Calu3 (cell line): ENCODE measurements at regions of chr3 and their contacts with region 1.

Region 1: DNA sequence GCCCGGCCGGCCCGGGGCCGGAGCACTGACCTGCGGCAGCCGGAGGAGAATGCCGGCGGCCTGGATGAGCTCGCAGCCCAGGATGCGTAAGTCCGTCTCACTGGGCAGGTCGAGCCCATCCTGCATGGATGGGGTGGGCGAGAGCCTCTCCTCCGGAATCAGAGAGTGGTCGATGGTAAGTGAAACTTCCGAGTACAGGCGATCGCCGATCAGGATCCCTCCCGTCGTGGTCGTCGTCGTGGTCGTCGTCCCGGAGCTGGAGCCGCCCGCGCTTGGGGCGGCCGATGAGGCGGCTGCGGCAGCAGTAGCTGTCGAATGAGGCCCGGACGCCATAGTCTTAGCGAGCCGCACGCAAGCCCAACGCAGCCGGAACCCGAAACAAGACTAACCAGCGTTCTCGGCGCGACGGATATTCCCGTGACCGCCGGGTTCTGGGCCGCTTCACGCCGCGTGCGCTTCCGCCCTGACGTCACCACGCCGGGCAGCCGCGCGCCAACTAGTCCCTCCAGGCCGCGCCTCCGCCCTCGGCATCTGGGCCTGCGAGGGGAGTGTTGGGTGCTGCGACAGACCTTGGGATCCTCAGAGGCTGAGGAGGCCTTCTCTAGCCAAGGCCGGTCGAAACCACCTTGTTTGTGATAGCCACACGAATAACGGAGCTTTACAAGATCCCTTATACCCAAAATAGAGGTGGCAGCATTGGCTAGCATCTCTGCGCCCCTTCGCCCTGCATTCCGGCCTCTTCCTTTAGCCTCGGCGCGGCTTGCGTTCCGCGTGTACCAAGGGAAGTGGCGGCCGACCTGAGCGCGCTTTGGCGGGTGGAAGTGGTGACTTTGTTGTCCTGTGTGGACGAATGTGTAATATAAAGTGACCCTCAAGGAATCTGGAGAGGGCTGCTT is at the start of gene CCNL1:
- DNase-seq: peak; percentile 99
- H3K4me3 Mint-ChIP-seq: peak within 1 kb of the TSS; percentile 89
- H3K27ac Mint-ChIP-seq: peak within 1 kb of the TSS; percentile 99
- H3K4me1 Mint-ChIP-seq: peaks cover 58% of the 10 kb centered on the region
- H3K27me3 Mint-ChIP-seq: no peaks in the 10 kb centered on the region
- CTCF ChIP-seq: no peak
- total RNA-seq, gene CCNL1: 291 and 303 TPM in 2 replicates

Region 2: DNA sequence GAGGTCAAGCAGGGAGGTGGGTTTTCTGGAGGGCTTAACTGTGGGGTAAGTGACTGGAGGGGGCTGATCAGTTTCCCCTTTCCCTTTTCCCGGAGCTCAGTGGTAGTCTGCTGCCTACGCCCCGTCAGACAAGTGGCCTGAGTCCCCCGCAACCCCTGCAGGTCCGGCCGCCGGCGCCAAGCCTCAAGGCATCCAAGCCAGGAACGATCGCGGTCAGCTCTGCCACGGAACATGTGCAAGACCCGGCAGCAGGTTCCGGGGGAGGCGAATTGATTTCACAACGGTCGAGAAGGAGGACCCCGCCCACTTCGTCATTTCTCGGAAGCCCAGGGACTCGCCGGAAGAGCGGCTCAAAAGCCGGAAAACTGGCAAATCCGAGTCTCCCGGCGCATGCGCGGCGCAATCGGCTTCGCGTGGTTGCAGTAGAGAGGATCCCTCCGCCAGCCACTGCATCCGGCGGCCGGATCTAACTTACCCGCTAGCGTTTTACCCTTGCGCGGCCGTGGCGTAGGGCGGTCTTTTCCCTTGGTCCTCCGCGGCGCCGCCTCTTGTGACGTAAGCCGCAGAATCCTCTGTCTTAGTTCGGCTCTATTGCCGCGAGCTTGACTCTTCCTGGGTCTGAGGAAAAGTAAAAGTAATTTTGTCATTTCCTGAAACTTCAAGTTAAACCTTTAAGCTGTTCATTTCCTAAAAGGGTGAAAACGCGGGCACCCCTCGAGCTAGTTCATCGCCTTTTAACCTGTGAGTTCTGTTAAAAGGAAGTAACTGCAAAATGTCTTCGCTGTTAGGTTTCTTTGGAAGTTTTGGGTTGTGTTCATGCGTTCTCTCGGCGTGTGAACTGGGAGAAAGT is 14.9 kb after region 1 on chr3:
- CTCF ChIA-PET with region 1: interaction called, 43 read pairs
- intact Hi-C with region 1: loop called (anchors 1 kb)
- DNase-seq: peak; percentile 100
- H3K4me3 Mint-ChIP-seq: peak overlapping the region; percentile 78
- H3K27ac Mint-ChIP-seq: peak overlapping the region; percentile 92
- H3K4me1 Mint-ChIP-seq: peaks cover 31% of the 10 kb centered on the region
- H3K27me3 Mint-ChIP-seq: no peaks in the 10 kb centered on the region
- CTCF ChIP-seq: no peak

Region 3: GRCh38 chr3:157248590-157249422 is 88.8 kb after region 1 on chr3:
- CTCF ChIA-PET with region 1: no interaction called
- intact Hi-C with region 1: loop called (anchors 5 kb)
- DNase-seq: peak; percentile 67
- H3K4me3 Mint-ChIP-seq: no peak overlapping the region
- H3K27ac Mint-ChIP-seq: peak overlapping the region; percentile 21
- H3K4me1 Mint-ChIP-seq: peaks cover 19% of the 10 kb centered on the region
- H3K27me3 Mint-ChIP-seq: no peaks in the 10 kb centered on the region
- CTCF ChIP-seq: no peak

Region 4: DNA sequence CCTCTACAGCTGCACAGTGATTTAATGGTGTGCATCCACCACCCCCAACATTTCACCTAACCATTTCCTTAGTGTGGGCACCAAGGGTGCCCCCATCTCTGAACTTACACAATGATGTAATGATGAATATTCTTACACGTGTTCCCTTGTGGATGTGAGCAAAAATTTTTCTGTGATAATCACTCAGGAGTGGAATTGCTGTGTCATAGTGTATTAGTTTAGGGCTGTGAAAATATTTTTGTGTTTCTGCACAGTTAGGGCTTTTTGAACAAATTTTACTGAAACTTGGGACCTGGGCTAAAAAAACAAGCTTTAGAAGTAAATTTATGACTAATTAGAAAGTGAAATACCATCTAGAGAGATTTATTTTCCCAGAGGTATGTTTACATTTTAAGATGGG is 134.5 kb after region 1 on chr3:
- CTCF ChIA-PET with region 1: no interaction called
- intact Hi-C with region 1: no loop called
- DNase-seq: no peak
- H3K4me3 Mint-ChIP-seq: no peak overlapping the region
- H3K27ac Mint-ChIP-seq: no peak overlapping the region
- H3K4me1 Mint-ChIP-seq: no peaks in the 10 kb centered on the region
- H3K27me3 Mint-ChIP-seq: no peaks in the 10 kb centered on the region
- CTCF ChIP-seq: no peak

Region 5: GRCh38 chr3:157499342-157499963 is 339.4 kb after region 1 on chr3:
- CTCF ChIA-PET with region 1: interaction called, 4 read pairs
- intact Hi-C with region 1: loop called (anchors 5 kb)
- DNase-seq: peak; percentile 93
- H3K4me3 Mint-ChIP-seq: peak overlapping the region; percentile 81
- H3K27ac Mint-ChIP-seq: peak overlapping the region; percentile 95
- H3K4me1 Mint-ChIP-seq: peaks cover 80% of the 10 kb centered on the region
- H3K27me3 Mint-ChIP-seq: no peaks in the 10 kb centered on the region
- CTCF ChIP-seq: no peak